Naive thymus-derived CD4-positive, alpha-beta T cell (primary cell): ENCODE measurements at regions of chr6 and their contacts with region 1.

Region 1: GRCh38 chr6:105992315-105992961 is 93.7 kb upstream of the PRDM1 start:
- DNase-seq: peak; percentile 82 to 91 (median 89)
- ATAC-seq: peak; percentile 93
- H3K4me3 ChIP-seq: peak overlapping the region; percentile 89
- H3K4me3 Mint-ChIP-seq: peak overlapping the region; percentile 88 to 98 (median 92)
- H3K27ac ChIP-seq: peak overlapping the region; percentile 79
- H3K27ac Mint-ChIP-seq: peak overlapping the region; percentile 87 to 97 (median 93)
- H3K4me1 ChIP-seq: peaks cover 14 to 23% of the 10 kb centered on the region in 2 donors
- H3K4me1 Mint-ChIP-seq: peaks cover 16 to 58% (median 29%) of the 10 kb centered on the region in 7 donors
- H3K27me3 ChIP-seq: peaks cover 0 to 32% of the 10 kb centered on the region in 2 donors
- H3K27me3 Mint-ChIP-seq: peaks cover 48 to 73% (median 62%) of the 10 kb centered on the region in 5 donors

Region 2: GRCh38 chr6:105733565-105734162 is 258.8 kb before region 1 on chr6:
- CTCF ChIA-PET with region 1: interaction called, 3 read pairs
- POLR2A ChIA-PET with region 1: no interaction called
- intact Hi-C with region 1: loop called (anchors 2 to 5 kb)
- DNase-seq: peak in 6 of 9 donors; percentile 10 to 41 (median 34)
- ATAC-seq: no peak
- H3K4me3 ChIP-seq: no peak overlapping the region
- H3K4me3 Mint-ChIP-seq: no peak overlapping the region
- H3K27ac ChIP-seq: no peak overlapping the region
- H3K27ac Mint-ChIP-seq: no peak overlapping the region
- H3K4me1 ChIP-seq: no peaks in the 10 kb centered on the region
- H3K4me1 Mint-ChIP-seq: peaks cover 0 to 36% (median 8%) of the 10 kb centered on the region in 7 donors
- H3K27me3 ChIP-seq: no peaks in the 10 kb centered on the region
- H3K27me3 Mint-ChIP-seq: peaks cover 0 to 8% (median 0%) of the 10 kb centered on the region in 5 donors

Region 3: GRCh38 chr6:105810105-105810921 is 182.1 kb before region 1 on chr6:
- CTCF ChIA-PET with region 1: interaction called, 3 read pairs
- POLR2A ChIA-PET with region 1: no interaction called
- intact Hi-C with region 1: loop called in 1 of 2 experiments (anchors 5 kb)
- DNase-seq: peak in 1 of 9 donors; percentile 69
- ATAC-seq: peak; percentile 72
- H3K4me3 ChIP-seq: no peak overlapping the region
- H3K4me3 Mint-ChIP-seq: peak overlapping the region in 2 of 10 donors; percentile 17 to 61
- H3K27ac ChIP-seq: no peak overlapping the region
- H3K27ac Mint-ChIP-seq: peak overlapping the region in 3 of 9 donors; percentile 26 to 78 (median 55)
- H3K4me1 ChIP-seq: peaks cover 0 to 30% of the 10 kb centered on the region in 2 donors
- H3K4me1 Mint-ChIP-seq: peaks cover 0 to 74% (median 23%) of the 10 kb centered on the region in 7 donors
- H3K27me3 ChIP-seq: no peaks in the 10 kb centered on the region
- H3K27me3 Mint-ChIP-seq: no peaks in the 10 kb centered on the region

Region 4: GRCh38 chr6:105880030-105880492 is 112.4 kb before region 1 on chr6:
- CTCF ChIA-PET with region 1: no interaction called
- POLR2A ChIA-PET with region 1: no interaction called
- intact Hi-C with region 1: no loop called
- DNase-seq: peak in 3 of 9 donors; percentile 7 to 42 (median 9)
- ATAC-seq: peak; percentile 86
- H3K4me3 ChIP-seq: no peak overlapping the region
- H3K4me3 Mint-ChIP-seq: peak overlapping the region in 9 of 10 donors; percentile 14 to 75 (median 47)
- H3K27ac ChIP-seq: no peak overlapping the region
- H3K27ac Mint-ChIP-seq: peak overlapping the region in 1 of 9 donors; percentile 7
- H3K4me1 ChIP-seq: no peaks in the 10 kb centered on the region
- H3K4me1 Mint-ChIP-seq: peaks cover 0 to 60% (median 9%) of the 10 kb centered on the region in 7 donors
- H3K27me3 ChIP-seq: no peaks in the 10 kb centered on the region
- H3K27me3 Mint-ChIP-seq: peaks cover 6 to 41% (median 34%) of the 10 kb centered on the region in 5 donors

Region 5: DNA sequence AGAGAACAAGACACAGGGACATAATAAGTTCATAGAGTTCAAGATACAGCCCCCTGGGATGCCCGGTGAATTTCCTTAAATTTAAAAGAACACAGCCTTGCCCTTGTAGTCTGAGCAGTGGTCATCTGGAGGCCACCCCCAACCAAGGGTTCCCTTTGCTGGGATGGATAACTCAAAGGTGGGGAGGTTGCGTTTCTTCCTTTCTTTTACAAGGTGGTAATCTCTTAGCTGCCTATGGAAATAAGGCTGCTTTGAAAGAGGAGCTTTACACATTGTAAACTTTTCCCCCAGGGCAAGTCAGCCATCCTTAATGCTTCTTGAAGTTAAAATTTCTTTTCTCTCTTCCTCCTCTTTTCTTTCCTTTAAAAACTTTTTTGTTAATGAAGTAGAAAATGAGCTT is 22.5 kb after region 1 on chr6:
- CTCF ChIA-PET with region 1: no interaction called
- POLR2A ChIA-PET with region 1: no interaction called
- intact Hi-C with region 1: no loop called
- DNase-seq: no peak
- ATAC-seq: no peak
- H3K4me3 ChIP-seq: no peak overlapping the region
- H3K4me3 Mint-ChIP-seq: no peak overlapping the region
- H3K27ac ChIP-seq: no peak overlapping the region
- H3K27ac Mint-ChIP-seq: no peak overlapping the region
- H3K4me1 ChIP-seq: no peaks in the 10 kb centered on the region
- H3K4me1 Mint-ChIP-seq: peaks cover 0 to 12% (median 0%) of the 10 kb centered on the region in 7 donors
- H3K27me3 ChIP-seq: no peaks in the 10 kb centered on the region
- H3K27me3 Mint-ChIP-seq: peaks cover 7 to 35% (median 9%) of the 10 kb centered on the region in 5 donors

Region 6: GRCh38 chr6:106085984-106086813 is 93.8 kb after region 1 on chr6 and contains the start of gene PRDM1:
- CTCF ChIA-PET with region 1: no interaction called
- POLR2A ChIA-PET with region 1: interaction called, 4 read pairs
- intact Hi-C with region 1: loop called (anchors 1 kb)
- DNase-seq: peak; percentile 33 to 79 (median 53)
- ATAC-seq: peak; percentile 92
- H3K4me3 ChIP-seq: peak within 1 kb of the TSS; percentile 63
- H3K4me3 Mint-ChIP-seq: peak within 1 kb of the TSS; percentile 84 to 96 (median 90)
- H3K27ac ChIP-seq: no peak within 1 kb of the TSS
- H3K27ac Mint-ChIP-seq: peak within 1 kb of the TSS; percentile 37 to 92 (median 78)
- H3K4me1 ChIP-seq: peaks cover 50 to 60% of the 10 kb centered on the region in 2 donors
- H3K4me1 Mint-ChIP-seq: peaks cover 50 to 89% (median 76%) of the 10 kb centered on the region in 7 donors
- H3K27me3 ChIP-seq: peaks cover 0 to 14% of the 10 kb centered on the region in 2 donors
- H3K27me3 Mint-ChIP-seq: peaks cover 10 to 47% (median 18%) of the 10 kb centered on the region in 5 donors
- total RNA-seq, gene PRDM1: 2.0 to 64.1 (median 22.6) TPM

Region 7: GRCh38 chr6:106223300-106223930 is 231.0 kb after region 1 on chr6:
- CTCF ChIA-PET with region 1: interaction called, 8 read pairs
- POLR2A ChIA-PET with region 1: no interaction called
- intact Hi-C with region 1: loop called (anchors 1 to 2 kb)
- DNase-seq: peak; percentile 18 to 76 (median 65)
- ATAC-seq: peak; percentile 91
- H3K4me3 ChIP-seq: no peak overlapping the region
- H3K4me3 Mint-ChIP-seq: no peak overlapping the region
- H3K27ac ChIP-seq: no peak overlapping the region
- H3K27ac Mint-ChIP-seq: peak overlapping the region in 2 of 9 donors; percentile 5 to 61
- H3K4me1 ChIP-seq: no peaks in the 10 kb centered on the region
- H3K4me1 Mint-ChIP-seq: peaks cover 9 to 25% (median 17%) of the 10 kb centered on the region in 7 donors
- H3K27me3 ChIP-seq: no peaks in the 10 kb centered on the region
- H3K27me3 Mint-ChIP-seq: no peaks in the 10 kb centered on the region

Region 8: DNA sequence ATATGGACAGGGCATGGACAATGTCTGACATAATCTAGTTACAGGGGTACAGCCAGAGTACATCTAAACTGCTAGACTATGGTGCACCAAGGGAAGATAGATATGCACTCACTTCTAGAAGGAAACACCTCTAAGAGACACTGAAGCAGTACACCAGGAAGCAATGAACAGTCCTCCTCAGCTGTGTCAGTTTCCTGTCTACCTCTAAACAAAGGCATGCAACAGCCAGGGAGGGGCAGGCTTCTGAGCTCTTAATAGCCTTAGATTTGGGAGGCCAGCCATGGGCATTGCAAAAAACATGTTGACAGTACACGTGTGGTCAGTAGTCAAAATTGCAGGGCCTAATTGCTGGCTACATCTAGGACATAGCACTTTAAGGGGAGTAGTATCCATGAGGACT is 389.4 kb after region 1 on chr6:
- CTCF ChIA-PET with region 1: no interaction called
- POLR2A ChIA-PET with region 1: no interaction called
- intact Hi-C with region 1: no loop called
- DNase-seq: peak in 1 of 9 donors; percentile 1
- ATAC-seq: no peak
- H3K4me3 ChIP-seq: no peak overlapping the region
- H3K4me3 Mint-ChIP-seq: no peak overlapping the region
- H3K27ac ChIP-seq: no peak overlapping the region
- H3K27ac Mint-ChIP-seq: no peak overlapping the region
- H3K4me1 ChIP-seq: no peaks in the 10 kb centered on the region
- H3K4me1 Mint-ChIP-seq: peaks cover 0 to 10% (median 5%) of the 10 kb centered on the region in 7 donors
- H3K27me3 ChIP-seq: peaks cover 0 to 4% of the 10 kb centered on the region in 2 donors
- H3K27me3 Mint-ChIP-seq: peaks cover 0 to 16% (median 0%) of the 10 kb centered on the region in 5 donors